Activated T-helper 1 cell treated with anti-CD3 and anti-CD28 coated beads, Interleukin-12 subunit alpha, Interleukin-12 subunit beta, Interleukin-2, Interleukin-4 antibody, amounts not matched to agents 30 ng/mL and 10 ng/mL and 1 ng/mL, durations not matched to agents 14 hours and 24 hours and 36 hours (primary cell): ENCODE measurements at regions of chr10 and their contacts with region 1.

Region 1: DNA sequence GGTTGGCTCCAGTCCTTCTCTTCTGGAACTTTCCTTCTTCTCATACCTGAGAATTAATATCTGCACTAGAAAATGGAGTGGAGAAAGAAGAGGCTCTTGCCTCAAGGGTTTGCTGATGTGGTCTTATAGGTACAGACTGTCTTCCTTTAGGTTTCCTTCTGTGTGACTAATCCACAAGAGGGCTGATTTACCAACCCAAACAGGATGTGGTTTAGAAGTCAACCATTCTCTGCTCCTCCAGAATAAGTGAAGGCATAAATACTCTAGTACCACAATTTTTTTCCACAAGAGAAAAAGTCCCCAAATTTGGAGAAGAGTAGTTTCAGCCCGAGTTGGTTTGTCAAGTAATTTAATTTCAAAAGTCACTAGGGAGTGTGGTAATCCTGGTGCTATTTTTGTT is 85.8 kb downstream of the NRP1 start:
- DNase-seq: peak; percentile 47
- H3K4me3 Mint-ChIP-seq: peak overlapping the region; percentile 37
- H3K27ac Mint-ChIP-seq: peak overlapping the region; percentile 54
- H3K4me1 Mint-ChIP-seq: peaks cover 75% of the 10 kb centered on the region
- H3K27me3 Mint-ChIP-seq: peaks cover 33% of the 10 kb centered on the region

Region 2: DNA sequence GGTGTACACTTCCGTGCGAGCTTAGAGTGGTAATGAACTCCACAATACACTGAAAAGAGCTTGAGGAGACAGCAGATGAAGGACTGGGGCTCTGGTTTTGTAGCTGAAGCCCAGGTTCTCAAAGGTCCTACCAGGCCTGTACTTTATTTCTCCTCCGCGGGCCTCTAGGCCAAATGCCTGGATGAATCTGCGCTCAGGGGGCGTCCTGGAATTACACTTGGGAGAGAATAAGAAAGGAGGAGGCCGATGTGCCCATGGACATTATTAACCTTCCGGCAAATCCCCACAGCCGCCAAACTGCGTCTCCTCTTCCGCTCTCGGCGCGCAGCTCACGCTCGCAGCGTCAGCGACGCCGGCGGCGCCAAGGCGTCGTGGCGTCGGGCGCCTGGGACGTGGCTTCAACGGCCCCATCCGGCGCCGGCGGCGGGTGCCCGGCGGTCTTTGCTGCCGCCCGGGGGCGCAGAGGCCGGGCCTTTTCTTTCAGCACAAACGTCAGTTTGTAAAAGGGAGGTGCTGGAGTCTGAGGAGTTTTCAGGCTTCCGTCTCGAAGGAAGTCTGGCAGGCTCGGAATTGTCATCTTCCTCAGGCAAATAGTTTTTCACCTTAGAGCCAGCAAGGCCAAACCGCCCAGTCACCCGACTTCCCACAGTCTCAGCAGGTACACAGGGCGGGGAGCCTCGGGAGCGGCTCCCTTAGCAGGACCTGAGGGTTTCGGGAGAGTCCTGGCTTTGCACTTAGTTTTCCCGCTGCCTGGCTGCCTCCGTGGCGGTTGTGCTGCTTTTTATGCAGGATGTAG is 802.7 kb before region 1 on chr10 and contains the start of gene CCDC7:
- intact Hi-C with region 1: loop called (anchors 10 kb)
- DNase-seq: peak; percentile 83
- H3K4me3 Mint-ChIP-seq: peak within 1 kb of the TSS; percentile 98
- H3K27ac Mint-ChIP-seq: peak within 1 kb of the TSS; percentile 96
- H3K4me1 Mint-ChIP-seq: peaks cover 9% of the 10 kb centered on the region
- H3K27me3 Mint-ChIP-seq: peaks cover 3% of the 10 kb centered on the region
- total RNA-seq, gene CCDC7: 9.0 and 10.2 TPM in 2 replicates

Region 3: DNA sequence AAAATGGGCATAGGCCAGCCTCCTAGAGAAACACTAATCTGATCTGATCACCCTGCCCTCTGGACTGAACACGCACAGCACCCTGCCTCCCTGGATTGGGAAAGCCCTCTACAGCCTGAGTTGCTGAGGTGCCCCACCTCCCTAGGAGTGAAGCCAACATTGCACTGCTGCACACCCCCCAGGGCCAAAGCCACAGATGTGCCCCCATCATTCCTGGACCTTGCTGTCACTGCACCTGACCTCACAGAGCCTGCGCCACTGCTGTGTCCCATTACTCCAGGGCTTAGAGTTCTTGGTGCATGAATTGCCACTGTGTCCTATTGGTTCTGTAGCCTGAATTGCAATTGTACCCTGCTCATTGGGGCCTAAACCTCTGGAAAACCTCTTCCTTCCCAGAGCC is 392.3 kb before region 1 on chr10:
- intact Hi-C with region 1: no loop called
- DNase-seq: no peak
- H3K4me3 Mint-ChIP-seq: no peak overlapping the region
- H3K27ac Mint-ChIP-seq: no peak overlapping the region
- H3K4me1 Mint-ChIP-seq: no peaks in the 10 kb centered on the region
- H3K27me3 Mint-ChIP-seq: no peaks in the 10 kb centered on the region

Region 4: GRCh38 chr10:33134011-33134751 is 114.5 kb before region 1 on chr10:
- intact Hi-C with region 1: loop called (anchors 2 kb)
- DNase-seq: peak; percentile 48
- H3K4me3 Mint-ChIP-seq: peak overlapping the region; percentile 48
- H3K27ac Mint-ChIP-seq: peak overlapping the region; percentile 88
- H3K4me1 Mint-ChIP-seq: peaks cover 61% of the 10 kb centered on the region
- H3K27me3 Mint-ChIP-seq: no peaks in the 10 kb centered on the region

Region 5: DNA sequence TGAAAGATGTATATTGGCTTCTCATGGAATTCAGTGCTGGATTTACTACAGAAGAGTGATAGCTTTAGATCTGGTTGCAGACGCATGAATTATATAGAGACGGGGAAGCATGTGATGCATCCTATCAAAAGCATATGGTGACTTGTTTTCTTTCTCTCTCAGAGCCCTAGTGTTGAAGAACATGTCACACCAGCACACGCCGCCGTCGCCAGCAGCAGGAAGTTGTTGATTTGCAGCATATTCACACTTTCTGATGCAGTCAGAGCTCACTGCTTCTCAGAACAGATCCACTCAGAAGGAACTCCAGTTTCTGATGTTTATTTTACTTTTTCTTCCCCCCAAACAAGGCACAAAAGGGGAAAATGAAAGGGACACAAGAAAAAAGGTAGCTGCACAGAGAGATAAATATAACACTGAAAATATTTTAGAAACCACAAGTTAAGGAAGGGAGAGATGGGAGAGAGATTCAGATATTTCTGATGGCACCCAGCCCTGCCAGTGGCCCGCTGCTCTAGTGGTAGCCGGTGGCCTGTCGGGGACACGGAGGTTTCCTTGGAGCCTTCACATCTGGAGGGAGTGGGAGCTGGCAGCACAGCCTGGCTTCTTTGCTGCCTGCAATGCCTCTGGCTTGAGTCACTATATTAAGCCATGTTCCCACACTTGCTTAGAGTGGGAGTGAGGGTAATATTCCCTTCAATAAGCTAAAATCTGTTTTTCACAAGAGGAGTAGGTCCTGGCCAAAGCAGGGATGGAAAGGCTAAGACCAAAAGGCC is 37.3 kb before region 1 on chr10:
- intact Hi-C with region 1: loop called (anchors 2 kb)
- DNase-seq: no peak
- H3K4me3 Mint-ChIP-seq: no peak overlapping the region
- H3K27ac Mint-ChIP-seq: peak overlapping the region; percentile 76
- H3K4me1 Mint-ChIP-seq: peaks cover 30% of the 10 kb centered on the region
- H3K27me3 Mint-ChIP-seq: peaks cover 2% of the 10 kb centered on the region

Region 6: GRCh38 chr10:33330543-33331378 is 82.1 kb after region 1 on chr10:
- intact Hi-C with region 1: loop called (anchors 5 kb)
- DNase-seq: peak; percentile 53
- H3K4me3 Mint-ChIP-seq: no peak overlapping the region
- H3K27ac Mint-ChIP-seq: no peak overlapping the region
- H3K4me1 Mint-ChIP-seq: peaks cover 22% of the 10 kb centered on the region
- H3K27me3 Mint-ChIP-seq: peaks cover 55% of the 10 kb centered on the region

Region 7: DNA sequence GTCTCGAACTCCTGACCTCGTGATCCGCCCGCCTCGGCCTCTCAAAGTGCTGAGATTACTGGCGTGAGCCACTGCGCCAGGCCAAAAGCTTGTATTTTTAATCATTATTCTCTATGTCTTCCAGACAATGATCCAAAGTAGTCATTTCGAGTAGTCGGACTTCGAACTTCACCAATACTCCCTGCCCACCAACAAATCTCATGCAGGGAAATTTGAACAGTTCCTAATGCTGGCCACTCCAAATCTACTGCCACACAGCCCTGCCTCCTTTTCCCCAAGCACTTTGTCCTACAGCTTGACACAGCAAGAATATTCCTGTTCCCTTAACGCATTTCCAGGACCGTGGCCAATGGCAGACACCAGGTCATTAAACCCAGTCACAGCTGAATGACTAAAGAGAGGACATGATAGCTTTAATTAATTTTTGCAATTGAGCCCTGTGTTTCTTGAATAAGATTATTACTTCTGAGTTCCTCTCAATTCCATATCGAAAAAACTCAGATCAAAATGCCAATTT is 228.2 kb after region 1 on chr10:
- intact Hi-C with region 1: no loop called
- DNase-seq: no peak
- H3K4me3 Mint-ChIP-seq: no peak overlapping the region
- H3K27ac Mint-ChIP-seq: no peak overlapping the region
- H3K4me1 Mint-ChIP-seq: no peaks in the 10 kb centered on the region
- H3K27me3 Mint-ChIP-seq: no peaks in the 10 kb centered on the region

Region 8: GRCh38 chr10:34280599-34281374 is 1032.1 kb after region 1 on chr10:
- intact Hi-C with region 1: loop called (anchors 5 kb)
- DNase-seq: no peak
- H3K4me3 Mint-ChIP-seq: peak overlapping the region; percentile 45
- H3K27ac Mint-ChIP-seq: peak overlapping the region; percentile 76
- H3K4me1 Mint-ChIP-seq: peaks cover 31% of the 10 kb centered on the region
- H3K27me3 Mint-ChIP-seq: no peaks in the 10 kb centered on the region